T-cell (primary cell): ENCODE measurements at regions of chr15 and their contacts with region 1.

Region 1: DNA sequence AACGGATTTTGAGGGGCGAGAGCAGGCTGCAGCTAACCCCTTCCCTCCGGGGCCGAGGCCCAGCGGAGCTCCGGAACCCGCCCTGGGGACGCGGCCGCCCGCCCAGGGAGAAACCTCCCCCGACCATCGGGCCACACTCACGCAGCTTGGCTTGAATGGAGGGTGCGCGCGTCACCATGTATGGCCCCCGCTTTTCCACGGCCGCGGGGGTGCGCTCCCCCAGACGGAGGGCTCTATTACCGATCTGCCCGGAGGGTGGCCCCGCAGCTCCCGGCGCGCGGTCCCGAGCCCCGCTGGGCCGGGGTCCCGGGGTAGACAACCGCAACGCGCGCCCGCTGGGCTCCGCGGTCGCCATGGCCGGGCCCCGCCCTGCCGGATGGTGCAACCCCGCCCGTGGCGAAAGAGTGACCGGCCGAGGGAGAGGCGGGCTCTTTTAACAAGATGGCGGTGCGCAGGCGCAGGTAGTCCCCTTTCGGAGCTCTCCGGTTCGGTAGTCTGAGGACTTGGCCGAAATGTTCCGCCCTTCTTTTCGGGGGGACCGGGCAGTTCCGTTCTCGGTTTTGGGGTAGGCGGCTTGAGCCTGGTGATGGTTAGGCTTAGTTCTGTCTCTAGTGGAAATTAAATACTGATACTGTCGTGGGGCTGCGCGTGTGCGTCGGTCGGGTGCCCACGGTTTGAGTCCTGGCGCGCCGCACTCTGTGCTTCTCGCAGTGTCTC is at the start of gene FAM219B:
- DNase-seq: peak; percentile 8 to 76 (median 52)
- ATAC-seq: peak; percentile 77 to 82 (median 78)
- H3K4me3 ChIP-seq: peak within 1 kb of the TSS; percentile 74 to 96
- H3K4me3 Mint-ChIP-seq: peak within 1 kb of the TSS; percentile 97 to 98 (median 98)
- H3K27ac ChIP-seq: peak within 1 kb of the TSS; percentile 78
- H3K27ac Mint-ChIP-seq: peak within 1 kb of the TSS; percentile 96 to 97
- H3K4me1 ChIP-seq: peaks cover 6 to 30% of the 10 kb centered on the region in 2 experiments
- H3K4me1 Mint-ChIP-seq: peaks cover 42 to 48% (median 46%) of the 10 kb centered on the region in 3 donors
- H3K27me3 ChIP-seq: no peaks in the 10 kb centered on the region
- H3K27me3 Mint-ChIP-seq: no peaks in the 10 kb centered on the region
- total RNA-seq, gene FAM219B: 46.0 to 108 (median 96.6) TPM

Region 2: DNA sequence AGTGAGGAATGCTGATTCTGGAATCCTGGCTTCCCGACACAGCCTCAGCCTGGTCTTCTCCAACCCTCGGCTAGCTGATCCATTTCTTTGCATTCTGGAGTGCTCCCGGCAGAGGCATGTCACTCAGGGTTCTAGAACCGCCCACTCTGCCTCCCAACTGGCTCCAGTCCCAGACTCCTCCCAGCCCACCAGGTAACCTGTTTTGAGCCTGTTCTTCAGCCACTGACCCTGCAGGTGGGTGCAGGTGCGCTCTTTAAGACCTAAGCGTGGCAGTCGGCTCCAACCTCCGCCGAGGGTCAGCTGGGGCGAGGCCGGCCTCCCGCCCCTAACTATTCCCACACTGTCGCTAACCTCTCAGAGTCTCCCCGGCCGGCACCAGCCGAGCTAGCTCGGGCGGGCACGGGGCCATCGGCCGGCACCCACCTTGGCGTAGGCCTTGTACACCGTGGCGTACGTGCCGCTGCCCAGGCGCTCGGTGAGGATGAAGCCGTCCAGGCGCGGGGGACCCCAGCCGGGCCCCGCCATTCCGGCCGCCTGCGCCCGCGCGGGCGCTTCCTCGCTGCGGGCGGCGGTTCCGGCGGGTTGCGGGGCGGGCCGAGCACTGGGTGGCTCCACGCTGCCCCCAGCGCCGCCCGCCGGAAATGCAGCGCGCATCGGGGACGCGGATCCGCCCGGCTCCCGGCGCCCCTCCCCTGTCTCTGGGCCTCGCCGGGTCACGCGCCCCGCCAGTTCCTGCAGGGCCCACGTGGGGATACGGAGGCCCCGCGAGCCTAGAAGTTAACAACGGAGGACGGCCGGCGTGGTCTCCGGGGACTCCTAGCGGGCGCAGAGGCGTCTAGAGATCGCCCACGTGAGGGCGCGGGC is 63.8 kb before region 1 on chr15 and contains the start of gene ULK3:
- CTCF ChIA-PET with region 1: interaction called in 1 of 2 experiments, 18 read pairs
- POLR2A ChIA-PET with region 1: no interaction called
- DNase-seq: peak; percentile 82 to 95 (median 90)
- ATAC-seq: peak; percentile 84 to 90 (median 88)
- H3K4me3 ChIP-seq: peak within 1 kb of the TSS; percentile 84 to 96
- H3K4me3 Mint-ChIP-seq: peak within 1 kb of the TSS; percentile 86 to 90 (median 86)
- H3K27ac ChIP-seq: peak within 1 kb of the TSS; percentile 71
- H3K27ac Mint-ChIP-seq: peak within 1 kb of the TSS; percentile 96 to 97
- H3K4me1 ChIP-seq: peaks cover 28 to 66% of the 10 kb centered on the region in 2 experiments
- H3K4me1 Mint-ChIP-seq: peaks cover 48 to 64% (median 54%) of the 10 kb centered on the region in 3 donors
- H3K27me3 ChIP-seq: no peaks in the 10 kb centered on the region
- H3K27me3 Mint-ChIP-seq: no peaks in the 10 kb centered on the region
- total RNA-seq, gene ULK3: 53.4 to 112 (median 101) TPM

Region 3: DNA sequence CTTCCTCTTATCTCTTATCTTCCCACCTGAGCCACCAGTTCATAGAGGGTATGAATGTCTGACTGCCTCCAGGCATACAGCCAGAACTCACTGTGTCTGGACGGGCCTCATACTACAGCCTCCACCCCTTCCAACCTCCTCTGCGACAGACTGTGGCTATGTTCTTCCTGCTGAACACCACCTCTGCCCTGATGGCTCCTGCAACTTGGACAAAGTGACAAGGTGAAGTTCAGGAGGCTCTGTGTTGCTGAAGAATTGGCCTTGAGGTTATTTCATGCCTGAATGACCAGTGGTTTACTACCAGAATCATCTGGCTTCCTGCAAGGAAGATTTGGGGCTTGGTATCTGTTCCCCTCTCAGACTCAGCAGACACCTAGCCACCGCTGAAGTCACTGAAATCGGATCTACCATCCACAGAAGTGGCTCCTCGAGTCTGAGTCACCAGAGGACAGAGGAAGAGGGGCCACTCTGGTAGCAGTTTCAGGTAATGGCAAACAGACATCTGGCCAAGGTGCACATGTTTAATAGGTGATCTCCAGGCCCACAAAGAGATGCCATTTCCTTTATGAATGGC is 49.4 kb before region 1 on chr15:
- CTCF ChIA-PET with region 1: interaction called, 3 to 11 read pairs
- POLR2A ChIA-PET with region 1: no interaction called
- DNase-seq: no peak
- ATAC-seq: peak in 1 of 4 experiments; percentile 55
- H3K4me3 ChIP-seq: no peak overlapping the region
- H3K4me3 Mint-ChIP-seq: no peak overlapping the region
- H3K27ac ChIP-seq: peak overlapping the region; percentile 13
- H3K27ac Mint-ChIP-seq: peak overlapping the region; percentile 81 to 83
- H3K4me1 ChIP-seq: peaks cover 9 to 44% of the 10 kb centered on the region in 2 experiments
- H3K4me1 Mint-ChIP-seq: peaks cover 37 to 42% (median 41%) of the 10 kb centered on the region in 3 donors
- H3K27me3 ChIP-seq: no peaks in the 10 kb centered on the region
- H3K27me3 Mint-ChIP-seq: no peaks in the 10 kb centered on the region

Region 4: GRCh38 chr15:74873036-74873755 is 33.4 kb before region 1 on chr15 and contains the start of gene SCAMP2:
- CTCF ChIA-PET with region 1: interaction called, 5 to 15 read pairs
- POLR2A ChIA-PET with region 1: interaction called, 4 to 12 read pairs
- DNase-seq: peak; percentile 82 to 94 (median 89)
- ATAC-seq: peak; percentile 93 to 95 (median 94)
- H3K4me3 ChIP-seq: peak within 1 kb of the TSS; percentile 91 to 99
- H3K4me3 Mint-ChIP-seq: peak within 1 kb of the TSS; percentile 97 to 99 (median 99)
- H3K27ac ChIP-seq: peak within 1 kb of the TSS; percentile 98
- H3K27ac Mint-ChIP-seq: peak within 1 kb of the TSS; percentile 93 to 95
- H3K4me1 ChIP-seq: peaks cover 25 to 54% of the 10 kb centered on the region in 2 experiments
- H3K4me1 Mint-ChIP-seq: peaks cover 50 to 53% (median 51%) of the 10 kb centered on the region in 3 donors
- H3K27me3 ChIP-seq: no peaks in the 10 kb centered on the region
- H3K27me3 Mint-ChIP-seq: no peaks in the 10 kb centered on the region
- total RNA-seq, gene SCAMP2: 76.8 to 141 (median 134) TPM

Region 5: DNA sequence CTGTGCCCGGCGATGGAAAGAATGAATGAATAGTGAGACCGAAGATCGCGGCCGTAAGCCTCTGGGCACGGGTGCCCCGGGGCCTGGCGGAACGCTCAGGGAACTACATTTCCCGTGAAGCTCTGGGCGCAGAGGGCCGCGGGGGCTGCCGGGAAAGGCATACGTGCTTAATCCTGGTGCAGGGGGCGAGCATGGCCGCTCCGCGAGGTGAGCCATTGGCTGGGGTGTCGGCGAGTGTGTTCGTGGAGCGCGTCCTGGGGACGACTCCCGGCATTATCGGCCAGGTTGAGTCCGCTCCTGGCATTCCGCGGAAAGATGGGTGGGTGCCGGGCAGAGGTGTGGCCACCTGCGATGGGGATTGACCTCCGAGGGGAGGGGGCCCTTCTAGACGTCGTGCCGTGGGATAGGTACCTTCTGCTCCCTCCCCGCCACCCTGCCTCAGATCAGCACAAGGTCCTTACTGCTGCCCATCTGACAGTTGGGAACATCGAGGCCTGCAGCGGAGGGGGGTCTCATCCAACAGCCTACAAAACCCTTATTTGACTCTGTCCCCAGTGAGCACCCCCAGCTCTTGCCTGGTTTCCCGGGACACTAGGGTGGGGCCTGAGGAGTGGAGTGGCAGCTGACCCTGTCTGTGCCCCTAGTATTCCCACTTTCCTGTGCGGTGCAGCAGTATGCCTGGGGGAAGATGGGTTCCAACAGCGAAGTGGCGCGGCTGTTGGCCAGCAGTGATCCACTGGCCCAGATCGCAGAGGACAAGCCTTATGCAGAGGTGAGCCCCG is 16.5 kb before region 1 on chr15 and contains the start of gene MPI:
- CTCF ChIA-PET with region 1: interaction called, 5 to 14 read pairs
- POLR2A ChIA-PET with region 1: no interaction called
- DNase-seq: peak; percentile 62 to 88 (median 78)
- ATAC-seq: peak; percentile 89 to 95 (median 90)
- H3K4me3 ChIP-seq: peak within 1 kb of the TSS; percentile 89 to 90
- H3K4me3 Mint-ChIP-seq: peak within 1 kb of the TSS; percentile 90 to 91 (median 90)
- H3K27ac ChIP-seq: peak within 1 kb of the TSS; percentile 83
- H3K27ac Mint-ChIP-seq: peak within 1 kb of the TSS; percentile 89 to 94
- H3K4me1 ChIP-seq: peaks cover 14 to 52% of the 10 kb centered on the region in 2 experiments
- H3K4me1 Mint-ChIP-seq: peaks cover 46 to 56% (median 48%) of the 10 kb centered on the region in 3 donors
- H3K27me3 ChIP-seq: no peaks in the 10 kb centered on the region
- H3K27me3 Mint-ChIP-seq: no peaks in the 10 kb centered on the region
- total RNA-seq, gene MPI: 36.5 to 74.1 (median 66.1) TPM